ENCODE measurements at regions of chr7 and their contacts with region 1.

Region 1: DNA sequence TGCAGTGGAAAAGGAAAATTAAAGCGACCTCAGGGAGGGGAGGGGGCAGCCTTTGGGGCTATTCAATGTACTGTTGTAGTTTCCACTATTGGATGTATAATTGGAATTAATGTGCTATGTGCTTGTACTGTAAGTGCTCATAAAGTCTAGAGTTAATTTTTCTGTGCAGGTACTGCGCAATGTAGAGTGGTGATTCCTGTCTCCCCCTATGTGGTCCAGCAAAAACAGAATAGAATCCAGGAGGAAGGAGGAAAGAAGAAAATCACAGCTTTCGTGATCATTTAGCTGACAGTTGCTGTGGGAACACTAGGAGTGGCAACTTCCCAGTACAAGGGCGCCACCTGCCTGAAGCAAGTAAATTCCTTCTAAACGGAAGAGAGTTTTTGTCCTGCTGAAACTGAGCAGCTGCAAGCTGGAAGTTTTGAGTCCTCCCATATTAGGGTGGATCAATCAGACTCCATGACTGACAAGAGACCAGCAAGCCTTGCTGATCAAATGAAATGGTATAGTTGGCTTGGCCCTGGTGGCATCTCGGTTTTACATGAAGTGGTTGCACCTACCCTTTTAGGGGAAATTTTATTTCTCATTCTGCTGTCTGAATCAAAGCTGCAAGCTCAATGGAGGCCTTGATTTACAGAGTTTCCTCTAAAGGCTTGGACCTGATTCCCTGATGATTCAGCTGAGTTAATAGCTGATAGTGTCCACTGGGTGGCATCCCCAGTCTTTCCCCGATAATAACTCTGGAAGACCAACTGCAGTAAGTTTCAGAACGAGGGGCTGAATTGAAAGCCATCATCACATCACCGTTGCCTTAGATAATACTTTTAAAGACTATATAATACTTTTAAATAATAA is 299.8 kb downstream of the HGF start:
- DNase-seq: peak; percentile 87

Region 2: DNA sequence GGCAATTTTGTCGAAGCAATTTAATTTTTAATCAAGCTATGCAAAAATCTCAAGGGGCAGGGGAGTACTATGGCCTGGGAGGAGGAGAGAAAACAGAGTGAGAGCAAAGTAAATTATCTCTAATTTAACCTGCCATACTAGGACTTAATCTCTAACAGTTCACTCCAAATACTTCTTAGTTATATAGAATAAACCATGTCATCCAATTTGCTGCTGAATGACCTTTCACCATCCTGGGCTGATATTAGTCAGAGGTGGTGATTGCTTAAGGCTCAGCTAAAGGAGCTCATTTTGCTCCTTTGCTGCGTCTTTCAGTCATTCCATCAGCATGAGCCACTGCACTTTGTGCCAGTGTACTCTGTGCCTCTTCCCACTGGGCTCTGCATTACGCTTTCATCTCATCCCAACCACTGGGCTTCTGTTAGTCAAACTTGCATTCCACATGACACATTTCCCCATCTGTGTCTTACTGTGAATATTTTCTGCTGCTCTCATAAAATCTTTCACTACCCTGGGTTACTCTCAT is 747.4 kb before region 1 on chr7:
- in situ Hi-C with region 1: loop called (anchors 25 kb)
- DNase-seq: peak; percentile 100

Region 3: DNA sequence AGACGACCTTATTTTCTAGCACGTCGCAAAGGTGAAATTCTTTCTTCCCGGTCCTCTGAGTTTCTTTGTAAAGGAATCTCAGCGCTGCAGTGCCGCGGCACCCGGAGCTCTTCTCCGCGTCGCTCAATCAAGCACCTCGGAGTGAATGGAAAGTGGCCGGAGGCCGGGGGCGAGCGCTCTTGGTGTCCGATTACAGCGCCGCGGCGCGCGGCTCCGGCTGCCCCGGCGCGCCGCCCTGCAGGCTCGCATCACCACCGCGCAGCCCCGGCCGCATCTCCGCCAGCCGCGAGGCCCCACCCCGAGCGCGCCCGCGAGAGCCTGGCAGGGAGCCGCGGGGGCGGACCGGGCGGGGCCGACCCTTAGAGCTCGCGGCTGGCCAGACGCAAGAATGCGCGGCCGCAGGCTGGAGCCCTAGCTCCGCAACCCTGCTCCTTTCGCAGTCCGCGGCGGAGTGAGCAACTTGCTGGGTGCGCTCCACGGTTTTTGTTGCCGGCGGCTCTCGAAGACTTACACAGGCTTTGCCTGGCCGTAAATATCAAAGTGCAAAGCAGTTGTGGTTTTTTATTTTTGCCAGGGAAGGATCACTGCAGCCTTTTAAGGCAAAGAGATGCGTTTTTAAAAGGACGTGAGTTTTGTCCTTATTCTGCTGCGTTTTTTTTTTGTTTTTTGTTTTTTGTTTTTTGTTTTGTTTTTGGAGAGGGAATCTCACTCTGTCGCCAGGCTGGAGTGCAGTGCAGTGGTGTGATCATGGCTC is 551.0 kb before region 1 on chr7 and contains the start of gene SEMA3C:
- in situ Hi-C with region 1: loop called (anchors 25 kb)
- DNase-seq: peak; percentile 99

Region 4: DNA sequence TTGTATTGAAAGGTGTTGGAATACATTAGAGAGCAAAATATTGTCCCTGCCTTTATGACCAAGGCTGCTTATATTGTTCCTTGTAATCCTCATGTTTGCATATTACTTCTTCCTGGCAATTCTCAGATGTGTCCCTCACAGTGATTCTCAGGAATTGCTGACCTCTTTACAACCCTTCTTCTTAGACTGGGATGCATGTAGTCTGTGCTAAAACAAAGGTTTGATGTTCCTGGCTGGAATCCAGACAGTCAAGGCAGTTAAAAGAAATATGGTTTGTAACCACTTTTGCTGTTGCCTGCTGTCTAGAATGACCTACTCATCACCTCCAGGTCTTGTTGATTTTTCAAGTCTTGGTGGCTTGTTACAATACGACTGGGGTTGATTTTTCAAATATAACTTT is 67.9 kb before region 1 on chr7:
- in situ Hi-C with region 1: no loop called
- DNase-seq: no peak